MCF 10A (cell line): ENCODE measurements at regions of chr16 and their contacts with region 1.

Region 1: GRCh38 chr16:55465077-55465896 is 13.7 kb upstream of the MMP2 start:
- DNase-seq: peak; percentile 80
- H3K4me3 Mint-ChIP-seq: no peak overlapping the region
- H3K27ac Mint-ChIP-seq: no peak overlapping the region
- H3K4me1 Mint-ChIP-seq: peaks cover 3% of the 10 kb centered on the region
- H3K27me3 Mint-ChIP-seq: no peaks in the 10 kb centered on the region
- CTCF ChIP-seq: peak; percentile 100

Region 2: DNA sequence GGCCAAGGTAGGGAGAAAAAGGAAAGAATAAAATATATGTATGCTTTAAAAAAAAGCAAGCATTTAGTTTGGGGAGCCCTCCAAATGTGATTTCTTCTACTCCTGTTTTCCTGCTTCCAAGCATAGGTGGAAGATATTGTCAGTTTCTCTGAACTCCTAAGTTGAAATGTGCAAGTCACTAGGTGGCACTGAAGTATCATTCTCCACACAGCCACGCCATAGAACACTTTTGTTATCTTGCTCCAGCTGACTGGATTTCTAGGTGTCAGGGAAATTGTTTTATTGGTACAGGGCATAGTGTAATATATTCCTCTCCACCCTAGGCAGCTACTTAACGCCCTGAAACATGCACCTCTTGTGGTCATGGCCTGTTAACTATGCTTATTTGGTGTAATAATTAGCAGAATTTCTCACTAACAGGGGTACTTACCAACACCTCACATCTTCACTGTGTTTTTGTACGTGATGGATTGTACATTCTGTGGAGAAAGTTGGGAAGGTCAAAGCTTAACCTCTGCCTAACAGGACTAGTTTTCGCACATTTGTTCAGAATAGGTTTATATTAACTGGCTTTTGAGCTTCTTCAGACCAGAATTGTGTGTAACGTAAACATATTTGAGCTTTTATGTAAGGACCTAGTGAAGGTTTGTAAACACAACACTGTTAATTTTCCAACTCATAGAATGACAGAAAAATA is 1692.0 kb before region 1 on chr16:
- CTCF ChIA-PET with region 1: no interaction called
- POLR2A ChIA-PET with region 1: no interaction called
- intact Hi-C with region 1: loop called (anchors 10 kb)
- DNase-seq: peak; percentile 81
- H3K4me3 Mint-ChIP-seq: no peak overlapping the region
- H3K27ac Mint-ChIP-seq: no peak overlapping the region
- H3K4me1 Mint-ChIP-seq: peaks cover 43% of the 10 kb centered on the region
- H3K27me3 Mint-ChIP-seq: no peaks in the 10 kb centered on the region
- CTCF ChIP-seq: peak; percentile 60

Region 3: DNA sequence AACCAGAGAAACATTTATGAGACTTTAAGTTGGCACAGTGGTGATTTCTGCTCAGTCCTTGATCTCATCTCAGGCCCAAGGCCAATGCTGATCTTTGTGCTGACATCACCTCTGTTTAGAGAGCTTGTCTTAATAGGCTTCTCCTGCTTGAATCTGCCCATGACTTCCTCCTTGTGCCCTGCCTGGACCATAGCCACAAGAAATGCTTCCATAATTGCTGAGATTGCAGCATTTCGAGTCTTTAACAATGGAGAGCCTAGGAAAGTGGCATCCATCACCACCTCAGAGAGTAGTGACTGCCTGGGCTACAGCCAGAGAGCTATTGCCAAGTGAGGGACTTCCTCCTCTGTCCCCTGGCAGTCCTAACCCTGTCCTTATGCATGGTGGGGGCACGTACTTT is 11.4 kb before region 1 on chr16:
- CTCF ChIA-PET with region 1: interaction called, 35 read pairs
- POLR2A ChIA-PET with region 1: no interaction called
- intact Hi-C with region 1: no loop called
- DNase-seq: no peak
- H3K4me3 Mint-ChIP-seq: no peak overlapping the region
- H3K27ac Mint-ChIP-seq: no peak overlapping the region
- H3K4me1 Mint-ChIP-seq: no peaks in the 10 kb centered on the region
- H3K27me3 Mint-ChIP-seq: no peaks in the 10 kb centered on the region
- CTCF ChIP-seq: no peak

Region 4: GRCh38 chr16:55529018-55529417 is 63.7 kb after region 1 on chr16:
- CTCF ChIA-PET with region 1: interaction called, 28 read pairs
- POLR2A ChIA-PET with region 1: no interaction called
- intact Hi-C with region 1: no loop called
- DNase-seq: no peak
- H3K4me3 Mint-ChIP-seq: no peak overlapping the region
- H3K27ac Mint-ChIP-seq: no peak overlapping the region
- H3K4me1 Mint-ChIP-seq: no peaks in the 10 kb centered on the region
- H3K27me3 Mint-ChIP-seq: no peaks in the 10 kb centered on the region
- CTCF ChIP-seq: no peak

Region 5: DNA sequence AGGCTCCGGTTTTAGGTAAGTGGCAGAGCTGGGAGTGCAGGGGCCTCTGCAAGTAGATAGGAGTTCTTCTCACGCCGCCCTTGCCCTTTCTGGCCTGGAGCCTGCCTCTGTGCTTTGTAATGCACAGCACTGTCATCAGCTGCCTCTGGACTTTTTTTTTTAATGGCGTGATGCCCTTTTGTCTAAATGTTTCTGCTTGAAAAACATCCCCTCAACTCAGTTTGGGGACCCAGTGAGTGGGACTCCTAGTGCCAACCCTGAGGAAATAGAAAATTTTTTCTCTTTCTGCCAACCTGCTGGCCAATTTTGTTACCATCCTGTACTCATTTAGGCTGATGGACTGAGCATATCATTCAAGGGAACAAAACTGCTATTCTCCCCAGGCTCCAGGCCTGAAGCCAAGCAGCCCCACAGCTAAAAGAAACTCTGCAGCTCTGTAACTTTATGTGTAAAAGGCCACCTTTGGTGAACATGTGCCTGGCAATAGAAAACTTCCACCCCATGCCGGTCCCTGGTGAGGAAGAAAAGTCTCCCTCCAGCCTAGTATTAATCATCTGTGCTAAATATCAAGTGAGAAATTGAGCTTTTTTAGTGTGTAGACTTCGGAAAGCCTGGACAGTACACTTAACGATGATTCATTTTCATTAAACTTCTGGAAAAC is 213.0 kb after region 1 on chr16:
- CTCF ChIA-PET with region 1: interaction called, 13 read pairs
- POLR2A ChIA-PET with region 1: no interaction called
- intact Hi-C with region 1: no loop called
- DNase-seq: no peak
- H3K4me3 Mint-ChIP-seq: no peak overlapping the region
- H3K27ac Mint-ChIP-seq: no peak overlapping the region
- H3K4me1 Mint-ChIP-seq: no peaks in the 10 kb centered on the region
- H3K27me3 Mint-ChIP-seq: no peaks in the 10 kb centered on the region
- CTCF ChIP-seq: no peak

Region 6: DNA sequence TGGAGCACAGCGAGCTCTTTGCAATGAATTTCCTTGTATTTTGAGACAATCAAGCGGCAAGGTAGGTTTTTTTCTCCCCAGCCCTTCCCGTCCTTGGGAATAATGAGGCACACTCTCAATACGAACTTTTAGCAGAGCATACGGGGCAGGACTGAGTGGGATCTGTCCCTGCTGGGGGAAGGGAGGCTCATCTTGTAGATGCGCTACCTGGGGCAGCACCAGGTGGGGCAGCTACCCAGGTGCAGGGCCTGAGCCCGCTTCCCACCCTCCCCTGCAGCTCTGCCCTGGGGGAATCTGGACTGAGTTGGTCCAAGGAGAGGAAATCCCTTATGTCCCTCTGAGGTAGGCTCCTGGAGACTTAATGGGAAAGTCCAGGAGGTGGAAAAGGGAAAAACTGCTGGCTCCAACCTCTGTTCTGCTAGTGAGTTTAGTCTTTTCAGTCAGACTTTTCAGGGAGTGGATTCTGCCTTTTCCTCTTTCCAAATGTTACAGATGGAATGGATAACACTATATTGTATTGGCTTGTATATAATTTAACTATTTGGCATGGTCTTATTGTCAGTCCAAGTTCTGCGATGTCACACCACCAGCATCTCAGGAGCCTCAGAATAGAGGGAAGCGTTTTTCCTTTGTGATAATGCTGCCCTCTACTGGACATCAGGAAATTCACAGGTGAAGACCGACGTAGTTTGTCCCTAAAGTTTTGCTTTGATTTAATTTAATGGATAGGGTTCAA is 377.2 kb after region 1 on chr16:
- CTCF ChIA-PET with region 1: interaction called, 11 read pairs
- POLR2A ChIA-PET with region 1: no interaction called
- intact Hi-C with region 1: loop called (anchors 5 kb)
- DNase-seq: peak; percentile 66
- H3K4me3 Mint-ChIP-seq: no peak overlapping the region
- H3K27ac Mint-ChIP-seq: no peak overlapping the region
- H3K4me1 Mint-ChIP-seq: no peaks in the 10 kb centered on the region
- H3K27me3 Mint-ChIP-seq: peaks cover 19% of the 10 kb centered on the region
- CTCF ChIP-seq: peak; percentile 59